ENCODE measurements at regions of chr5 and their contacts with region 1.

Region 1: GRCh38 chr5:87300744-87301143 is 33.1 kb downstream of the RASA1 start:
- DNase-seq: peak in 5 of 14 experiments; percentile 5 to 57 (median 38)
- ATAC-seq: peak; percentile 48
- H3K4me3 ChIP-seq: no peak overlapping the region
- H3K4me3 Mint-ChIP-seq: no peak overlapping the region
- H3K27ac ChIP-seq: no peak overlapping the region
- H3K27ac Mint-ChIP-seq: no peak overlapping the region
- H3K4me1 ChIP-seq: peaks cover 14% of the 10 kb centered on the region
- H3K4me1 Mint-ChIP-seq: peaks cover 73% of the 10 kb centered on the region
- H3K27me3 ChIP-seq: no peaks in the 10 kb centered on the region
- H3K27me3 Mint-ChIP-seq: no peaks in the 10 kb centered on the region
- CTCF ChIP-seq: no peak

Region 2: DNA sequence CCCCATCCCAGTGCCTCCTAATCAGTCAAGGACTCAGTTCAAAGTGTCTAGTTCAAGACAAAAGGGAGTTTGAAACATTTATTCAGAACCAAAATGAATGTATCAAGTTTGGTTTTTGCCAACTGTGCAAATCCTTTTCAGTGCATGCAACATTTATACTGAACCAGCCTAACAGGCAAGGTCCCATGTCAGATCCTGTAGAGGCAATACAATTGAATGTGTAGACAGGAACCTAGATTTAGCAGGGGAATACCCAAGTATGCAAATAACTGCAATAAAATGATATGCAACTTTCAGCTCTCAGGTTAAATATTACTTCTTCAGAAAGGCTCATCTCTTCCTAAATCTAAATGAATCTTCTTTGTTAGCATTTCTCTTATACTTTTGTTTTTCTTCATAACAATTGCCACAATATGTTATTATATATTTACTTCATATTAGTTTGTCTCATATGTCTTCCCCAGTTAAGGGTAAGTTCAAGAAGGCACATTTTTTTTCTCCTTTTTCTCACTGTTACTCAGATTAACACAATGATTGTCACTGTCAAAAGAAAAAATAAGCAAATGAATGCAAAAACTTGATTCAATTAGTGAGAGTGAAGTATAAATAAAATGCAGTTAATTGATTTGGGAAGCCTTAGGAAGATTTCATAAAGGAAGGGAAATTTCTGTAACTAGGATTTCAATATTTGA is 197.0 kb before region 1 on chr5:
- CTCF ChIA-PET with region 1: no interaction called
- POLR2A ChIA-PET with region 1: no interaction called
- intact Hi-C with region 1: no loop called
- DNase-seq: no peak
- ATAC-seq: no peak
- H3K4me3 ChIP-seq: no peak overlapping the region
- H3K4me3 Mint-ChIP-seq: no peak overlapping the region
- H3K27ac ChIP-seq: no peak overlapping the region
- H3K27ac Mint-ChIP-seq: no peak overlapping the region
- H3K4me1 ChIP-seq: no peaks in the 10 kb centered on the region
- H3K4me1 Mint-ChIP-seq: peaks cover 19% of the 10 kb centered on the region
- H3K27me3 ChIP-seq: no peaks in the 10 kb centered on the region
- H3K27me3 Mint-ChIP-seq: no peaks in the 10 kb centered on the region
- CTCF ChIP-seq: no peak

Region 3: DNA sequence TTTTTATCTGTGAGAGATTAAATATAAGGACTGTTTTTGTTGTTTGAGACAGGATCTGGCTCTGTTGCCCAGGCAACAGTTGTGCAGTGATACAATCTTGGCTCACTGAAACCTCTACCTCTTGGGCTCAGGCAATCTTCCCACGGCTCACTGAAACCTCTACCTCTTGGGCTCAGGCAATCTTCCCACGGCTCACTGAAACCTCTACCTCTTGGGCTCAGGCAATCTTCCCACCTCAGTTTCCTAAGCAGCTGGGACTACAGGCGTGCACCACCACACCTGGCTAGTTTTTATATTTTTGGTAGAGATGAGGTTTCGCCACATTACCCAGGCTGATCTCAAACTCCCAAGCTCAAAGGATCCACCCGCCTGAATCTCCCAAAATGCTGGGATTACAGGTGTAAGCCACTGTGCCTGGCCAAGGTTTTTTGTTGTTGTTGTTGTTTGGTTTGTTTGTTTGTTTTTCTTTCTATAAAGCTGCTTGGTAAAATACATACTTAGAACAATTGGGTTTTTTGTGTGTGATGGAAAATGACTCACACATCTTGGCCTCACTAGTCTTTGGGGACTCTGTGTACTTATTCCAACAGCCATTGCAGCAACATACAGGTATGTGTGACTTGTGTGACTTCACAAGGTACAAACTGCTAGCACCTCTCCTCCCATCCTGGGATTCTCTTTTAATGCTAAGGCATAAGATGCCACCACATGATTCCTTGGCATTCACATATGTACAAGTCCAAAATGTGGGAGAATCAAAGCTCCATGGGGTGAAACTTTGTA is 69.5 kb before region 1 on chr5:
- CTCF ChIA-PET with region 1: no interaction called
- POLR2A ChIA-PET with region 1: no interaction called
- intact Hi-C with region 1: loop called in 1 of 2 experiments (anchors 2 kb)
- DNase-seq: peak in 3 of 14 experiments; percentile 30 to 32 (median 31)
- ATAC-seq: peak; percentile 32
- H3K4me3 ChIP-seq: no peak overlapping the region
- H3K4me3 Mint-ChIP-seq: no peak overlapping the region
- H3K27ac ChIP-seq: no peak overlapping the region
- H3K27ac Mint-ChIP-seq: no peak overlapping the region
- H3K4me1 ChIP-seq: peaks cover 5% of the 10 kb centered on the region
- H3K4me1 Mint-ChIP-seq: peaks cover 11% of the 10 kb centered on the region
- H3K27me3 ChIP-seq: no peaks in the 10 kb centered on the region
- H3K27me3 Mint-ChIP-seq: no peaks in the 10 kb centered on the region
- CTCF ChIP-seq: no peak

Region 4: DNA sequence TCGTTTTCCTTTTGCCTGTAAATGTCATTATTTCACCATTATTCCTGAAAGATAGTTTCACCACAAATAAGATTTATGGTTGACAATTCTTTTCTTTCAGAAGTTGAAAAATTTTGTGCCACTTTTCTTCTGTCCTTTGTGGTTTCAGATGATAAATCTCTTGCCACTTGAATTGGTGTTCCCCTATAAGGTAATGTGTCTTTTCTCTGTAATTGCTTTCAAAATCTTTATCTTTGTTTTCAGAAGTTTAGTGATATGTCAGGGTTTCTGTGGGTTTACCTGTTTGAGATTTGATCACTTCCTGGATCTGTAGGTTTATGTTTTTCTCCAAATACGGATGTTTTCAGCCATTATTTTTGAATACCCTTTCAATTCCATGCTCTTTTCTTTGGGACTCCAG is 18.5 kb before region 1 on chr5:
- CTCF ChIA-PET with region 1: interaction called, 3 read pairs
- POLR2A ChIA-PET with region 1: interaction called, 3 read pairs
- intact Hi-C with region 1: loop called in 1 of 2 experiments (anchors 2 kb)
- DNase-seq: peak in 3 of 14 experiments; percentile 52 to 65 (median 52)
- ATAC-seq: peak; percentile 89
- H3K4me3 ChIP-seq: peak overlapping the region; percentile 36
- H3K4me3 Mint-ChIP-seq: peak overlapping the region; percentile 89
- H3K27ac ChIP-seq: peak overlapping the region; percentile 39 to 65
- H3K27ac Mint-ChIP-seq: peak overlapping the region; percentile 95
- H3K4me1 ChIP-seq: peaks cover 8% of the 10 kb centered on the region
- H3K4me1 Mint-ChIP-seq: peaks cover 64% of the 10 kb centered on the region
- H3K27me3 ChIP-seq: no peaks in the 10 kb centered on the region
- H3K27me3 Mint-ChIP-seq: no peaks in the 10 kb centered on the region
- CTCF ChIP-seq: no peak

Region 5: DNA sequence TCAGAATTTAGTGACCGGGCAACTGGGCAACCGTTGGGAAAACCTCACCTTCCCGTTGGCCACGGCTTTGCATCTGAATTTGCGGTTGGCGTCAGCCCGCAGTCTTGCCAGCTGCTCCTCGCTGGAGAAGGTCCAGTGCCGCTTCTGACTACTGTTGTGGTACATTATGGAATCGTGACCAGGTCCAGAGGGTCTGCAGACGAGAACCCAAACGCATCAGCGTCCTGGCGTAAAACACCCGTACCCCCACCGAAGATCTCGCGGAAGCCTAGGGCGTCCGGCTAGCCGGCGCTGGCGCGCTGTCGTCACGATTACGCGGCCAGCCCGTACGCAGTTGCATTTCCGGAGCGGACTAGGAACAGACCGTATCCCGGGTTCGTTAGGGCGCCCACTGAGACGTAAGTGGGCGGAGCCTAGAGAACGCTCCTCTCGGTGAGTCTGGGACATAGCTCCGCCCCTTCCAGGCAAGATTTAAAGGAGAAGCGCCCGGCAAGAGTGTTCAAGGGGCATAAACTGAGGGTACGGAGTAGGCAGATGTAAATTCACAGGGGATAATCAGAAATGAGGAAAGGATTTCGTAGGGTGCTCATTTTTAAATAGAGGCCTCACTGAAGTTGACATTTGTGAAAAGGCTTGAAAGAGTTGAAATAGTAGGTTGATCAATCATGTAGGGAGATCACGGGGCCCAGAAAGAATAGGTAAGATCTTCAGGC is 112.0 kb after region 1 on chr5 and contains the start of gene CCNH:
- CTCF ChIA-PET with region 1: no interaction called
- POLR2A ChIA-PET with region 1: no interaction called
- intact Hi-C with region 1: no loop called
- DNase-seq: peak; percentile 91 to 99 (median 95)
- ATAC-seq: peak; percentile 95
- H3K4me3 ChIP-seq: peak within 1 kb of the TSS; percentile 95
- H3K4me3 Mint-ChIP-seq: peak within 1 kb of the TSS; percentile 97
- H3K27ac ChIP-seq: peak within 1 kb of the TSS; percentile 90 to 98
- H3K27ac Mint-ChIP-seq: peak within 1 kb of the TSS; percentile 96
- H3K4me1 ChIP-seq: peaks cover 19% of the 10 kb centered on the region
- H3K4me1 Mint-ChIP-seq: peaks cover 50% of the 10 kb centered on the region
- H3K27me3 ChIP-seq: no peaks in the 10 kb centered on the region
- H3K27me3 Mint-ChIP-seq: no peaks in the 10 kb centered on the region
- CTCF ChIP-seq: no peak
- total RNA-seq, gene CCNH: 309 to 311 TPM

Region 6: GRCh38 chr5:87526131-87526530 is 225.4 kb after region 1 on chr5:
- CTCF ChIA-PET with region 1: no interaction called
- POLR2A ChIA-PET with region 1: no interaction called
- intact Hi-C with region 1: no loop called
- DNase-seq: no peak
- ATAC-seq: no peak
- H3K4me3 ChIP-seq: no peak overlapping the region
- H3K4me3 Mint-ChIP-seq: no peak overlapping the region
- H3K27ac ChIP-seq: no peak overlapping the region
- H3K27ac Mint-ChIP-seq: no peak overlapping the region
- H3K4me1 ChIP-seq: no peaks in the 10 kb centered on the region
- H3K4me1 Mint-ChIP-seq: no peaks in the 10 kb centered on the region
- H3K27me3 ChIP-seq: no peaks in the 10 kb centered on the region
- H3K27me3 Mint-ChIP-seq: no peaks in the 10 kb centered on the region
- CTCF ChIP-seq: no peak

Measured in CD4-positive, alpha-beta T cell (primary cell).